ENCODE measurements at regions of chr20 and their contacts with region 1.

Region 1: GRCh38 chr20:23235173-23236027 is 115.2 kb upstream of the NXT1 start:
- DNase-seq: peak; percentile 71
- H3K4me3 Mint-ChIP-seq: no peak overlapping the region
- H3K27ac Mint-ChIP-seq: no peak overlapping the region
- H3K4me1 Mint-ChIP-seq: peaks cover 16% of the 10 kb centered on the region
- H3K27me3 Mint-ChIP-seq: no peaks in the 10 kb centered on the region
- CTCF ChIP-seq: peak; percentile 73

Region 2: DNA sequence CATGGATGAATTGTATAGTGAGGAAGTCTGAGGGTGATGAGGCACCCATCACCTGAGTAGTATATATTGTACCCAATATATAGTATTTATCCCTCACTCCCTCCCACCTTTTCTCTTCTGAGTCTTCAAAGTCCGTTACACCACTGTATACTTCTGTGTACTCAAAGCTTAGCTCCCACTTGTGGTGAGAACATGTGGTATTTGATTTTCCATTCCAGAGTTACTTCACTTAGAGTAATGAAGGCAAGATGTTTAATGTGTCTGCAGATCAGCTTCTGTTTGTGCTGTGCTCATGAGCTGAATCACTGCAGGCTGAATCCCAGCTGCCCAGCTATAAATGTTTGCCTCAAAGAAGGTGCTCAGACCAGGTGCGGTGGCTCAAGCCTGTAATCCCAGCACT is 511.8 kb before region 1 on chr20:
- CTCF ChIA-PET with region 1: interaction called, 15 read pairs
- POLR2A ChIA-PET with region 1: no interaction called
- intact Hi-C with region 1: loop called (anchors 10 kb)
- DNase-seq: no peak
- H3K4me3 Mint-ChIP-seq: no peak overlapping the region
- H3K27ac Mint-ChIP-seq: no peak overlapping the region
- H3K4me1 Mint-ChIP-seq: peaks cover 7% of the 10 kb centered on the region
- H3K27me3 Mint-ChIP-seq: no peaks in the 10 kb centered on the region
- CTCF ChIP-seq: no peak

Region 3: DNA sequence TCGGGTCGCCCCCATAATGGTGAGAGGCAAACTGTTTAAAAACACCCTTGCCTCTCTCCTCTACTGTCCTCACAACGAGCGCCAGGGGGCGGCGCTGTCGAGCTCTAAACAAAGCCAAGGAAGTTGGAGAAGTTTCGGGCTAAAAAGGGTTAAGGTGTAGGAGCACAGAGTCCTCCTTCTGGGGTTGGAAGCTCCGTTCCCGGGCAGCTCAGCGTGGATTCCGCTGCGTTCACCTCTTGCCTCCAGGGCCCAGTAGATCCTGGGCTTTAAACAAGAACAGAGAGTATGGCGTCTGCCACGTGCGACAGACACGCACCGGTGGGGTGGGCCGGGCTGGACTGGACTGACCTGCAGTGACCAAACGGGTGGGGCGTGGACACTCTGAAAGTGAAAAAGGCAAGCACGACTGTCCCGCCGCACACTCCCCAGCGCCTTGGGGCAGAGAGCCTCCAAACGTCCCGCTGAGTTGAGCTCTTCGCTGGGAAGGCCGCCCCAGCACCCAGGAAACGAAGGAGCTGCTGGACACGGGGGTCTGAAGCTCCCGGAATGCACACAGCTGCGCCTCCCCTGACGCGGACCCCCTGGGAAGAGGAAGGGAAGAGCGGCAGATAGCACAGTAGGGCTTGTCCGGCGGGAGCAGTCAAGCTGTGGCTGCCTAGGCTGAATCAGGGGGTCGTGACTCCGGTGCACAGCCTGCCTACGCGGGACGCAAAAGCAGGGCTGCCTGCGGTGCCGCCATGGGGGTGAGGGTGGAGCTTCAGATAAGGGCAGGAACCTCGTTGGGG is 184.4 kb before region 1 on chr20:
- CTCF ChIA-PET with region 1: interaction called, 12 read pairs
- POLR2A ChIA-PET with region 1: interaction called, 4 read pairs
- intact Hi-C with region 1: loop called (anchors 1 kb)
- DNase-seq: peak; percentile 92
- H3K4me3 Mint-ChIP-seq: peak overlapping the region; percentile 74
- H3K27ac Mint-ChIP-seq: peak overlapping the region; percentile 92
- H3K4me1 Mint-ChIP-seq: peaks cover 17% of the 10 kb centered on the region
- H3K27me3 Mint-ChIP-seq: no peaks in the 10 kb centered on the region
- CTCF ChIP-seq: peak; percentile 78

Region 4: DNA sequence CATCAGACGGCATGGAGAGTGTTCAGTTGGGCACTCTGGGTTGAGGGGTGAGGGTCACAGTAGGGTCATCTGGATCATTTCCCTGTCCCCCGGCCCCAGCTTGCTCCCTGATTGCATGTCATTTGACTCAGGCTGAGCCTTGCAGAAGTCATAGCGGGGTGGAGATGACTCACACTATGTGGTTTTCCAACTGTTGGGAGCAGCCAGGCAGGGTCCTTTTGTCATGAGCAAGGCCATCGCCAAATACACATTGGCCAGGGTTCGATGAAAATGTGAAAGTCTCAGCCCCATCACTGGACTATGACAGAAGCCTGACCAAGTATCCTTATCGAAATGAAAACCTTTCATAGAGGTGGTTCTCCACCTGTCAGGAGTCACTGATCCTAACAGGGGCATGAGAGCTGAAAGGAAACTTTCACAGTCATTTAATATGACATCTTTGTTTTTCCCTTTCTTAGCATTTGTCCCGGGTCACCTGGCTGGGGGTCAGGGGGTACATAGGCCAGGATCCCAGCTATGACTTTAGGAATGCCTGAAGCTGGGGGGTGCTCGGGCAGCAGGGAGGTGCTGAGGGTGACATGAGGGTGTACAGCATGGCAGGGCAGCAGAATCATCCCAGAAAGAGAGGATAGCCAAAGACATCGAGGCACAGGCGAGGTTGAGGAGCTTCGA is 79.1 kb before region 1 on chr20:
- CTCF ChIA-PET with region 1: interaction called, 4 read pairs
- POLR2A ChIA-PET with region 1: no interaction called
- intact Hi-C with region 1: loop called (anchors 5 kb)
- DNase-seq: peak; percentile 93
- H3K4me3 Mint-ChIP-seq: no peak overlapping the region
- H3K27ac Mint-ChIP-seq: peak overlapping the region; percentile 99
- H3K4me1 Mint-ChIP-seq: peaks cover 70% of the 10 kb centered on the region
- H3K27me3 Mint-ChIP-seq: no peaks in the 10 kb centered on the region
- CTCF ChIP-seq: no peak

Region 5: GRCh38 chr20:23257848-23258746 is 22.7 kb after region 1 on chr20:
- CTCF ChIA-PET with region 1: interaction called, 12 read pairs
- POLR2A ChIA-PET with region 1: interaction called, 3 read pairs
- intact Hi-C with region 1: no loop called
- DNase-seq: peak; percentile 88
- H3K4me3 Mint-ChIP-seq: no peak overlapping the region
- H3K27ac Mint-ChIP-seq: peak overlapping the region; percentile 57
- H3K4me1 Mint-ChIP-seq: peaks cover 26% of the 10 kb centered on the region
- H3K27me3 Mint-ChIP-seq: no peaks in the 10 kb centered on the region
- CTCF ChIP-seq: no peak

Region 6: GRCh38 chr20:23366384-23366783 is 131.0 kb after region 1 on chr20:
- CTCF ChIA-PET with region 1: no interaction called
- POLR2A ChIA-PET with region 1: no interaction called
- intact Hi-C with region 1: no loop called
- DNase-seq: no peak
- H3K4me3 Mint-ChIP-seq: peak overlapping the region; percentile 40
- H3K27ac Mint-ChIP-seq: no peak overlapping the region
- H3K4me1 Mint-ChIP-seq: peaks cover 39% of the 10 kb centered on the region
- H3K27me3 Mint-ChIP-seq: no peaks in the 10 kb centered on the region
- CTCF ChIP-seq: no peak

Region 7: GRCh38 chr20:23393996-23394775 is 158.8 kb after region 1 on chr20:
- CTCF ChIA-PET with region 1: no interaction called
- POLR2A ChIA-PET with region 1: no interaction called
- intact Hi-C with region 1: no loop called
- DNase-seq: no peak
- H3K4me3 Mint-ChIP-seq: no peak overlapping the region
- H3K27ac Mint-ChIP-seq: peak overlapping the region; percentile 9
- H3K4me1 Mint-ChIP-seq: no peaks in the 10 kb centered on the region
- H3K27me3 Mint-ChIP-seq: no peaks in the 10 kb centered on the region
- CTCF ChIP-seq: no peak

Measured in MCF 10A (cell line).